ENCODE measurements at regions of chr19 and their contacts with region 1.

Region 1: DNA sequence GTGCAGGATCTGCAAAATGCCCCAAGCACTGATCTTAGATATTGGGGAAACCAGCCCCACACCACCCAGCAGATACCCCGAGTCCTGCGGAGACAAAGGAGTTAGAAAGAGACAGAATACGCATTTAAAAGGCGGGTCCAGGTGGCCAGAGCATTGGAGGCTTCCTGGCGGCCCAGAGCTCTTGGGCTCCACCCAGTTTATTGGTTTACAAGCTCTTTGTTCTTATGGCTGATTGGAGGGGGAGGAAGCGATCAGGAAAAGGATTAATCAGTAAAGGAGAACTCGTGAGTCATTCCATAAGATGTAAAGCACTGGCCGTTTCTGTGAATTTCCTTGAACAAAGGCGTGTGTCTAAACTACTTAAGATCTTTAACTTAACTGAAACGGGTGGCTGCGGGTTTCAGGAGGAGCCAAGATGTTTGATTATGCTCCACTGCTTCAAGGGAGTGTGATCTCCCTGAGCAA is 926 bp downstream of the ZNF587 start:
- DNase-seq: no peak
- ATAC-seq: no peak
- H3K4me3 ChIP-seq: peak overlapping the region; percentile 72
- H3K4me3 Mint-ChIP-seq: peak overlapping the region; percentile 93 to 97 (median 94)
- H3K27ac ChIP-seq: peak overlapping the region; percentile 92
- H3K27ac Mint-ChIP-seq: peak overlapping the region; percentile 90 to 98 (median 95)
- H3K4me1 ChIP-seq: peaks cover 7 to 11% of the 10 kb centered on the region in 2 donors
- H3K4me1 Mint-ChIP-seq: peaks cover 22 to 32% (median 28%) of the 10 kb centered on the region in 7 donors
- H3K27me3 ChIP-seq: no peaks in the 10 kb centered on the region
- H3K27me3 Mint-ChIP-seq: no peaks in the 10 kb centered on the region

Region 2: GRCh38 chr19:57719901-57720519 is 130.6 kb before region 1 on chr19:
- CTCF ChIA-PET with region 1: no interaction called
- POLR2A ChIA-PET with region 1: no interaction called
- intact Hi-C with region 1: no loop called
- DNase-seq: no peak
- ATAC-seq: no peak
- H3K4me3 ChIP-seq: peak overlapping the region; percentile 14
- H3K4me3 Mint-ChIP-seq: no peak overlapping the region
- H3K27ac ChIP-seq: no peak overlapping the region
- H3K27ac Mint-ChIP-seq: no peak overlapping the region
- H3K4me1 ChIP-seq: no peaks in the 10 kb centered on the region
- H3K4me1 Mint-ChIP-seq: peaks cover under 1 to 14% (median 9%) of the 10 kb centered on the region in 7 donors
- H3K27me3 ChIP-seq: no peaks in the 10 kb centered on the region
- H3K27me3 Mint-ChIP-seq: no peaks in the 10 kb centered on the region

Region 3: DNA sequence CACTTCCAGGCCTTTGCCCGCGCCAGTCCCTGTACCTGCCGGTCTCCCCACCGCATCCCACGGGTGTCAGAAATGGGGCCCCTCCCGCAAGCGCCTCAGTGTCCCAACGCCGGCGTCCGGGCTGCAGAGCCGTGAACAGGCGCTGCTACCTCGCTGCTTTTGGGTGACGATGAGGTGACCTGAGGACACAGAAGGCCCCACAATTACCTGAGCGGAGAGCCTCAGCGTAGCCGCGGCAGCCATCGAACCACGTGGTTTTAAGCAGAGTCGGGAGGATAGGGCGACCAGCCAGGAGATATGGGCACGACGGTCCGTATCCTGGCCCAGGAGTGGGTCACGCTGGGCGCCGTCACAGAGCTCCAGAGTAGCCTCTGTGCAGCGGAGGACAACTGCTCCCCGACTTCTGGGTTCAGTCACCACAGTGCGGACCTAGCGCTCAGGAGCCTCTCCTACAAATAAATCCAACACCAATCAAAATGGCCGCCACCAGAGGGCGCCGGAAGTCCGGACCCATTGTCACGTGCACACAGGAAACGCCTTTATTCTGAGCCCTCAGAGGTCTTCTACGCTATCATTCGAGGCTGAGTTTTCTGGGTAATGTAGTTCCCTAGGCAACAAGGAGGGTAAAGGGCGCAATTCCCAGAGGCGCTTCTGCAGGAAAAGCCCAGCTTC is 38.1 kb after region 1 on chr19 and contains the start of gene ZNF814:
- CTCF ChIA-PET with region 1: no interaction called
- POLR2A ChIA-PET with region 1: interaction called, 3 read pairs
- intact Hi-C with region 1: loop called in 1 of 2 experiments (anchors 1 kb)
- DNase-seq: peak; percentile 61 to 86 (median 81)
- ATAC-seq: peak; percentile 98
- H3K4me3 ChIP-seq: peak within 1 kb of the TSS; percentile 80
- H3K4me3 Mint-ChIP-seq: peak within 1 kb of the TSS; percentile 84 to 95 (median 90)
- H3K27ac ChIP-seq: peak within 1 kb of the TSS; percentile 74
- H3K27ac Mint-ChIP-seq: peak within 1 kb of the TSS; percentile 66 to 92 (median 86)
- H3K4me1 ChIP-seq: no peaks in the 10 kb centered on the region
- H3K4me1 Mint-ChIP-seq: peaks cover 18 to 33% (median 22%) of the 10 kb centered on the region in 7 donors
- H3K27me3 ChIP-seq: no peaks in the 10 kb centered on the region
- H3K27me3 Mint-ChIP-seq: no peaks in the 10 kb centered on the region
- total RNA-seq, gene ZNF814: 12.7 to 56.9 (median 32.7) TPM

Region 4: GRCh38 chr19:58144467-58144866 is 293.9 kb after region 1 on chr19:
- CTCF ChIA-PET with region 1: no interaction called
- POLR2A ChIA-PET with region 1: no interaction called
- intact Hi-C with region 1: no loop called
- DNase-seq: no peak
- ATAC-seq: no peak
- H3K4me3 ChIP-seq: no peak overlapping the region
- H3K4me3 Mint-ChIP-seq: no peak overlapping the region
- H3K27ac ChIP-seq: no peak overlapping the region
- H3K27ac Mint-ChIP-seq: no peak overlapping the region
- H3K4me1 ChIP-seq: peaks cover 0 to 1% of the 10 kb centered on the region in 2 donors
- H3K4me1 Mint-ChIP-seq: peaks cover 2 to 4% (median 4%) of the 10 kb centered on the region in 7 donors
- H3K27me3 ChIP-seq: no peaks in the 10 kb centered on the region
- H3K27me3 Mint-ChIP-seq: no peaks in the 10 kb centered on the region